ENCODE measurements at regions of chr3 and their contacts with region 1.

Region 1: GRCh38 chr3:192816351-192816750 is 89.0 kb upstream of the FGF12 start:
- DNase-seq: no peak
- H3K4me3 ChIP-seq: no peak overlapping the region
- H3K27ac ChIP-seq: no peak overlapping the region
- H3K4me1 ChIP-seq: peaks cover 21% of the 10 kb centered on the region
- H3K27me3 ChIP-seq: no peaks in the 10 kb centered on the region
- CTCF ChIP-seq: peak; percentile 40 to 72 (median 56)
- POLR2A ChIP-seq: no peak

Region 2: GRCh38 chr3:192802957-192803899 is 13.1 kb before region 1 on chr3:
- intact Hi-C with region 1: no loop called
- DNase-seq: no peak
- H3K4me3 ChIP-seq: no peak overlapping the region
- H3K27ac ChIP-seq: no peak overlapping the region
- H3K4me1 ChIP-seq: no peaks in the 10 kb centered on the region
- H3K27me3 ChIP-seq: no peaks in the 10 kb centered on the region
- CTCF ChIP-seq: peak in 2 of 3 experiments; percentile 17 to 36
- POLR2A ChIP-seq: no peak

Region 3: GRCh38 chr3:193040836-193041672 is 224.7 kb after region 1 on chr3:
- intact Hi-C with region 1: loop called (anchors 2 kb)
- DNase-seq: no peak
- H3K4me3 ChIP-seq: no peak overlapping the region
- H3K27ac ChIP-seq: no peak overlapping the region
- H3K4me1 ChIP-seq: no peaks in the 10 kb centered on the region
- H3K27me3 ChIP-seq: no peaks in the 10 kb centered on the region
- CTCF ChIP-seq: peak; percentile 32 to 57 (median 42)
- POLR2A ChIP-seq: no peak

Region 4: GRCh38 chr3:193572426-193572908 is 756.1 kb after region 1 on chr3:
- intact Hi-C with region 1: loop called (anchors 10 kb)
- DNase-seq: no peak
- H3K4me3 ChIP-seq: no peak overlapping the region
- H3K27ac ChIP-seq: no peak overlapping the region
- H3K4me1 ChIP-seq: no peaks in the 10 kb centered on the region
- H3K27me3 ChIP-seq: no peaks in the 10 kb centered on the region
- CTCF ChIP-seq: peak; percentile 36 to 65 (median 62)
- POLR2A ChIP-seq: no peak

Measured in vagina (tissue), 2 donors.